ENCODE measurements at regions of chr1 and their contacts with region 1.

Region 1: GRCh38 chr1:21963477-21964217 is 13.2 kb upstream of the CELA3B start:
- DNase-seq: peak; percentile 69 to 91 (median 79)
- ATAC-seq: peak; percentile 97
- H3K4me3 ChIP-seq: no peak overlapping the region
- H3K4me3 Mint-ChIP-seq: no peak overlapping the region
- H3K27ac ChIP-seq: no peak overlapping the region
- H3K27ac Mint-ChIP-seq: no peak overlapping the region
- H3K4me1 ChIP-seq: peaks cover 8% of the 10 kb centered on the region
- H3K4me1 Mint-ChIP-seq: peaks cover 7% of the 10 kb centered on the region
- H3K27me3 ChIP-seq: no peaks in the 10 kb centered on the region
- H3K27me3 Mint-ChIP-seq: no peaks in the 10 kb centered on the region
- CTCF ChIP-seq: peak; percentile 90

Region 2: DNA sequence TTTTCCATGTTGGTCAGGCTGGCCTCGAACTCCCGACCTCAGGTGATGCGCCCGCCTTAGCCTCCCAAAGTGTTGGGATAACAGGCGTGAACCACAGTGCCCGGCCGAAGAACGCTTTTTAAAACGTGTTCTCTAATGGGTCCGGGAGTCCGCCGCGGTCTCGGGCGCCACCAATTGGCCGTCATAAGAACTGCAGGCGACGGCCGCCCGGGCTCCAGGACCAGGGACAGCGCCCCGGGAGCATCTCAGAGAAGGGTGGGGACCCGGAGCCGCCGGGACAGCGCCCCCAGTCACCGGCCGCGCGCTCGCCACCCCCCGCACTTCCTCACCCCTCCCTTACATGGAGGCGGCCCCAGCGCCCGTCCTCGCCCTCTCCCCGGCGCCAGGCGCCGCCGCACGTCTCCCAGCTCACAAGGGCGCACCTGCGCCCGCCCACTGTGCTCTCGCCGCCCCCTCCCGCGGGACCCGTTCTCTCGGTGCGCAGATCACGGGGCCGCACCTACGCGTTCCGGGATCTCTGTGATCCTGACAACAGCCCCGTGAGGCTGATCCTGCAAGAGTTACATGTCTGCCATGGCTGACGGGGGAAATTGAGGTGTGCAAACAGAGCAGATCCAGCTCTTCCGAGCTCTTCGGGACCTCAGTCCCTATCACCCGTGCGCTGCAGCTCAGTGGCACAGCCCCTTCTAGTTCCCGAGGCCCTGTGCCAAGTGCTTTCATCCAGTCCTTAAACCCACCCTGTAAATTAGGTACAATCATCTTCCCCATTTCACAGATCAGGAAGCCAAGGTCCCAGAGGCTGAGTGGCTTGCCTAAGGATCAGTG is 304.3 kb before region 1 on chr1:
- CTCF ChIA-PET with region 1: no interaction called
- POLR2A ChIA-PET with region 1: no interaction called
- intact Hi-C with region 1: loop called in 1 of 2 experiments (anchors 10 kb)
- DNase-seq: peak; percentile 65 to 90 (median 84)
- ATAC-seq: peak; percentile 99
- H3K4me3 ChIP-seq: peak overlapping the region; percentile 8 to 10
- H3K4me3 Mint-ChIP-seq: peak overlapping the region; percentile 32
- H3K27ac ChIP-seq: no peak overlapping the region
- H3K27ac Mint-ChIP-seq: no peak overlapping the region
- H3K4me1 ChIP-seq: peaks cover 8% of the 10 kb centered on the region
- H3K4me1 Mint-ChIP-seq: peaks cover 5% of the 10 kb centered on the region
- H3K27me3 ChIP-seq: peaks cover 5 to 10% of the 10 kb centered on the region in 2 experiments
- H3K27me3 Mint-ChIP-seq: peaks cover 17% of the 10 kb centered on the region
- CTCF ChIP-seq: peak; percentile 93

Region 3: DNA sequence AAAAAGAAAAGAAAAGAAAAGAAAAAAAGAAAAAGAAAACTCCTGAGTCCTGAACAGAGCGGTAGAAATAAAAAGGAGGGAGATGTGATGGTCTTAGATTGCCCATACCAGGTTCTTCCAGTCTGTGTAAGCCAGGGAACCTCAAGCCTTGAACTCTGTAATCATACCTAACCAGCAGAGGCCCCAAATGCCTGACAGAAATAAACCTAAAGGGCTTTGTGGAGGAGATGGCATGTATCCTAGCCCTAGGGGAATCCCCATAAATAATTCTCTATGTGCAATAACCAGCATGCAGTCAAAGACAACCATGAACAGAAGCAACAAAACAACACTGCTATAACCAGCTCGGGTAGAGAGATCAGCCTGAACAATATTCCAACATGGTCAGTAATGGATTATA is 221.1 kb before region 1 on chr1:
- CTCF ChIA-PET with region 1: interaction called, 3 read pairs
- POLR2A ChIA-PET with region 1: no interaction called
- intact Hi-C with region 1: loop called in 1 of 2 experiments (anchors 5 kb)
- DNase-seq: no peak
- ATAC-seq: no peak
- H3K4me3 ChIP-seq: no peak overlapping the region
- H3K4me3 Mint-ChIP-seq: no peak overlapping the region
- H3K27ac ChIP-seq: no peak overlapping the region
- H3K27ac Mint-ChIP-seq: no peak overlapping the region
- H3K4me1 ChIP-seq: peaks cover 11% of the 10 kb centered on the region
- H3K4me1 Mint-ChIP-seq: peaks cover 18% of the 10 kb centered on the region
- H3K27me3 ChIP-seq: no peaks in the 10 kb centered on the region
- H3K27me3 Mint-ChIP-seq: no peaks in the 10 kb centered on the region
- CTCF ChIP-seq: peak; percentile 14

Region 4: GRCh38 chr1:21869620-21870121 is 94.0 kb before region 1 on chr1:
- CTCF ChIA-PET with region 1: no interaction called
- POLR2A ChIA-PET with region 1: no interaction called
- intact Hi-C with region 1: loop called in 1 of 2 experiments (anchors 10 kb)
- DNase-seq: no peak
- ATAC-seq: no peak
- H3K4me3 ChIP-seq: no peak overlapping the region
- H3K4me3 Mint-ChIP-seq: no peak overlapping the region
- H3K27ac ChIP-seq: no peak overlapping the region
- H3K27ac Mint-ChIP-seq: no peak overlapping the region
- H3K4me1 ChIP-seq: no peaks in the 10 kb centered on the region
- H3K4me1 Mint-ChIP-seq: no peaks in the 10 kb centered on the region
- H3K27me3 ChIP-seq: no peaks in the 10 kb centered on the region
- H3K27me3 Mint-ChIP-seq: no peaks in the 10 kb centered on the region
- CTCF ChIP-seq: no peak